H1 (cell line): ENCODE measurements at regions of chr10 and their contacts with region 1.

Region 1: GRCh38 chr10:90787393-90788198 is 70.2 kb downstream of the HTR7 start:
- DNase-seq: no peak
- H3K4me3 ChIP-seq: no peak overlapping the region
- H3K27ac ChIP-seq: no peak overlapping the region
- H3K4me1 ChIP-seq: peaks cover 0 to 11% (median 4%) of the 10 kb centered on the region in 4 experiments; a peak in 4 of 7 replicates
- H3K27me3 ChIP-seq: no peaks in the 10 kb centered on the region
- CTCF ChIP-seq: peak; percentile 57 to 86 (median 76)
- EP300 ChIP-seq: no peak
- POLR2A ChIP-seq: no peak
- RAD21 ChIP-seq: peak; percentile 65 to 77

Region 2: GRCh38 chr10:90745563-90745962 is 42.0 kb before region 1 on chr10:
- CTCF ChIA-PET with region 1: interaction called, 29 read pairs
- POLR2A ChIA-PET with region 1: no interaction called
- DNase-seq: no peak
- H3K4me3 ChIP-seq: no peak overlapping the region
- H3K27ac ChIP-seq: no peak overlapping the region
- H3K4me1 ChIP-seq: no peaks in the 10 kb centered on the region
- H3K27me3 ChIP-seq: no peaks in the 10 kb centered on the region
- CTCF ChIP-seq: no peak
- EP300 ChIP-seq: no peak
- POLR2A ChIP-seq: no peak
- RAD21 ChIP-seq: no peak

Region 3: DNA sequence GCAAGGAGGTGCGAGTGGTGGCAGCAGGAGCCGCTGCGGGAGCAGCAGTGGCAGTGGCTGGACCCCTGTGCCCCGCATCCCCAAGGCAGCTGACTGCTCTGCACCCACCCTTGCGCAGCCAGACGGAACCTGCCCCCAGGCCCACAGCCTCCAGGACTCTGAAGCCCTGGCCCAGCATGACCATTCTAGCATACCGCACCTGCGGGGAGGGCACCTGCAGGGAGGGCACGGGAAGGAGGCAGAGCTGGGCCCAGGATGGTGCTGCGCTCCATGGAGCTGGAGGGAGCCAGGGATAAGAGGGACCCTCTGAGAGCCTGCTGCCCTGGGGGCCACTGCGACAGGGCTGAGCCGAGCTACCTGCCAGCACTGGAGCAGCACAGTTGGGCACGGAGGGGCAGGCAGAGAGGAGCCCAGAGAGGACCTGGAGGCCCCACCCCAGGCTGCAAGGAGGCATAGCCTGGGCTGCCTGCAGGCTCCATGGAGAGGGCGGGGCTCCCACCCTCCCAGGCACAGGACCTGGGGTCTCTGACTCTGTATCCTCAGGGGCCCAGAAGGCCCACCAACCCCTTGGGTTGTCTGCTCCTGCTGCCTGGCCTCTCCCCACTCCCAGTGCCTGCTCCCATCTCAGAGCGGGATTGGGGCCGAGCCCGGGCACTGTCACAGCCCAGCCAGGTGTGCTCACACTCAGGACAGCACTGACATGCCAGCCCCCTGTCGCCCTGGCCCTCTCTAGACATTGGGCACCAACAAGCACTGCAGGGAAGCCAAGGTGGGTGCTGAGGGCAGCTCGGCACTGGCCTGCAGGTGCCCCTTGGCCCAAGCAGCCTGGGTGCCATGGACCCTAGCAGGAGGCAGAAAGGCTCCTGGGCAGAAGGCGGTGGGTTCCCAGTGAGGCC is 17.4 kb before region 1 on chr10:
- CTCF ChIA-PET with region 1: interaction called, 48 read pairs
- POLR2A ChIA-PET with region 1: interaction called, 3 read pairs
- DNase-seq: peak in 1 of 2 experiments; percentile 59
- H3K4me3 ChIP-seq: no peak overlapping the region
- H3K27ac ChIP-seq: no peak overlapping the region; the same call in 1 of the 2 replicates
- H3K4me1 ChIP-seq: peaks cover 0 to 11% (median 3%) of the 10 kb centered on the region in 4 experiments; a peak in 6 of 7 replicates
- H3K27me3 ChIP-seq: no peaks in the 10 kb centered on the region
- CTCF ChIP-seq: peak in 1 of 3 experiments; percentile 2; a peak in 1 of 4 replicates
- EP300 ChIP-seq: no peak
- POLR2A ChIP-seq: no peak
- RAD21 ChIP-seq: no peak

Region 4: GRCh38 chr10:90805211-90805610 is 17.6 kb after region 1 on chr10:
- CTCF ChIA-PET with region 1: interaction called, 37 read pairs
- POLR2A ChIA-PET with region 1: interaction called, 7 read pairs
- DNase-seq: no peak
- H3K4me3 ChIP-seq: peak overlapping the region in 1 of 4 experiments; percentile 38; a peak in 1 of 8 replicates
- H3K27ac ChIP-seq: no peak overlapping the region
- H3K4me1 ChIP-seq: peaks cover 0 to 8% (median 5%) of the 10 kb centered on the region in 4 experiments; a peak in 5 of 7 replicates
- H3K27me3 ChIP-seq: peaks cover 0 to 2% (median 0%) of the 10 kb centered on the region in 4 experiments; a peak in 1 of 7 replicates
- CTCF ChIP-seq: no peak
- EP300 ChIP-seq: no peak
- POLR2A ChIP-seq: no peak
- RAD21 ChIP-seq: no peak

Region 5: GRCh38 chr10:90857635-90858460 is 70.3 kb after region 1 on chr10 and contains the start of gene HTR7:
- CTCF ChIA-PET with region 1: interaction called, 24 read pairs
- POLR2A ChIA-PET with region 1: no interaction called
- DNase-seq: peak in 1 of 2 experiments; percentile 88
- H3K4me3 ChIP-seq: peak within 1 kb of the TSS; percentile 46 to 93 (median 79)
- H3K27ac ChIP-seq: no peak within 1 kb of the TSS; the same call in 1 of the 2 replicates
- H3K4me1 ChIP-seq: peaks cover 0 to 9% (median 2%) of the 10 kb centered on the region in 4 experiments; a peak in 3 of 7 replicates
- H3K27me3 ChIP-seq: peaks cover 1 to 14% (median 8%) of the 10 kb centered on the region in 4 experiments; a peak in 6 of 7 replicates
- CTCF ChIP-seq: peak; percentile 45 to 69 (median 55)
- EP300 ChIP-seq: no peak
- POLR2A ChIP-seq: no peak
- RAD21 ChIP-seq: peak; percentile 8 to 48; a peak in 2 of 4 replicates
- total RNA-seq, gene HTR7: 24.6 and 26.9 TPM in 2 replicates

Region 6: GRCh38 chr10:90920986-90921666 is 133.5 kb after region 1 on chr10 and contains the start of gene ANKRD1:
- CTCF ChIA-PET with region 1: no interaction called
- POLR2A ChIA-PET with region 1: no interaction called
- DNase-seq: peak in 1 of 2 experiments; percentile 67
- H3K4me3 ChIP-seq: no peak within 1 kb of the TSS
- H3K27ac ChIP-seq: no peak within 1 kb of the TSS
- H3K4me1 ChIP-seq: peaks cover 0 to 3% (median 2%) of the 10 kb centered on the region in 4 experiments; a peak in 3 of 7 replicates
- H3K27me3 ChIP-seq: peaks cover 88 to 98% (median 97%) of the 10 kb centered on the region in 4 experiments
- CTCF ChIP-seq: no peak
- EP300 ChIP-seq: no peak
- POLR2A ChIP-seq: no peak
- RAD21 ChIP-seq: no peak
- total RNA-seq, gene ANKRD1: not detected in 2 replicates